ENCODE measurements at regions of chr1 and their contacts with region 1.

Region 1: GRCh38 chr1:164617377-164618201 is 58.6 kb downstream of the PBX1 start:
- DNase-seq: no peak
- ATAC-seq: no peak
- H3K4me3 ChIP-seq: no peak overlapping the region
- H3K27ac ChIP-seq: peak overlapping the region in 3 of 10 donors; percentile 11 to 32 (median 11)
- H3K4me1 ChIP-seq: peaks cover under 1 to 99% (median 61%) of the 10 kb centered on the region in 9 donors
- H3K27me3 ChIP-seq: no peaks in the 10 kb centered on the region
- CTCF ChIP-seq: peak in 8 of 9 donors; percentile 13 to 60 (median 48)

Region 2: DNA sequence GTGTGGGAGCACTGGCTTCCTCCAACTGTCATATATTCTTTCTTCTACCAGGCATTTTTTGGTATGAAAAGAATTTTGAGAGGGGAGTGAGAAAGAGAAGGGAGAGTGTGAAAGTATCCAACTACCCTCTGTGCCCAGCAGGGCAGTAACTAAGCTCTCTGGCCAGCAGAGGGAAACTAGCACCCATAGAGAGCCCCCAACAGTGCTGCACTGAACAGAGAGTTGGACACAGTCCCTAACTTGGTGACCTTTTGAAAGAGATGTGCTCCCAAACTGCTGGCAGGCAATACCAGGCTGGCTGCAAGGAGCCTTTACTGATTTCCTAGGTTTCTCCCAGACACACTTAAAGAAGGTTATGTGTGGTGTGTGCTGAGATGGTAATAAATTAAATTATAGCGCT is 177.4 kb before region 1 on chr1:
- intact Hi-C with region 1: loop called in 3 of 10 experiments (anchors 5 to 10 kb)
- DNase-seq: peak in 1 of 2 donors; percentile 56
- ATAC-seq: peak; percentile 88 to 100 (median 98)
- H3K4me3 ChIP-seq: no peak overlapping the region
- H3K27ac ChIP-seq: peak overlapping the region in 1 of 10 donors; percentile 3
- H3K4me1 ChIP-seq: peaks cover 0 to 20% (median 3%) of the 10 kb centered on the region in 9 donors
- H3K27me3 ChIP-seq: no peaks in the 10 kb centered on the region
- CTCF ChIP-seq: peak in 8 of 9 donors; percentile 44 to 70 (median 56)